ENCODE measurements at regions of chr19 and their contacts with region 1.

Region 1: DNA sequence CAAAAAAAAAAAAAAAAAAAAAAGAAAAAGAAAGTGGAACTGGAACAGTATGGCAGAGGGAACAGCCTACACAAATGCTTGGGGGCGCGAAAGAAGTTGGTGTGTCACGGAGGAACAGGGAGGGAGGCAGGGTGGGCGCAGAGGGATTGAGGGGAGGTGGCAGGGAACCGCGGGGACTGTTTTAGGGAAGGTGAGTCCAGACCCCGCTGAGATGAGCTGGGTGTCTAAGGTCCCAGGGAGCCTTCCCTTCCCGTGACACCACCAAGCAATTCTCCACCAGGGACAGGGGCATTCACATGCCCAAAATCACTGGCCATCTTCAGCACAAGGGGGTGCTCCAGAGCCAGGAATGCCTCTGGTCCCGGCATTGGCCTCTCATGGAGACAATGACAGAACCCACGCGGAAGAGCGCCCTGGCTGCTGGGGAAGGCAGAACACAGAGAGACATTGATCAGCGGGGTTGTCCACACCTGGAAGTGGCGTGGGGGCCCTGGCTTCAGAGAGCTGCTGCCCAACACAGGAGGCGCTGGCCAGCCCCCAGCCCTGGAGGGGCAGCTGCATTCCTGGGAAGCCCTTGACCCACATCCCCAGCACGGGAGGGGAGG is 6.9 kb downstream of the PEAK3 start:
- DNase-seq: peak in 8 of 9 donors; percentile 43 to 70 (median 58)
- ATAC-seq: peak; percentile 18
- H3K4me3 ChIP-seq: no peak overlapping the region
- H3K4me3 Mint-ChIP-seq: peak overlapping the region in 8 of 10 donors; percentile 29 to 80 (median 50)
- H3K27ac ChIP-seq: peak overlapping the region; percentile 41
- H3K27ac Mint-ChIP-seq: peak overlapping the region; percentile 34 to 86 (median 79)
- H3K4me1 ChIP-seq: peaks cover 24 to 28% of the 10 kb centered on the region in 2 donors
- H3K4me1 Mint-ChIP-seq: peaks cover 22 to 35% (median 32%) of the 10 kb centered on the region in 7 donors
- H3K27me3 ChIP-seq: no peaks in the 10 kb centered on the region
- H3K27me3 Mint-ChIP-seq: no peaks in the 10 kb centered on the region

Region 2: DNA sequence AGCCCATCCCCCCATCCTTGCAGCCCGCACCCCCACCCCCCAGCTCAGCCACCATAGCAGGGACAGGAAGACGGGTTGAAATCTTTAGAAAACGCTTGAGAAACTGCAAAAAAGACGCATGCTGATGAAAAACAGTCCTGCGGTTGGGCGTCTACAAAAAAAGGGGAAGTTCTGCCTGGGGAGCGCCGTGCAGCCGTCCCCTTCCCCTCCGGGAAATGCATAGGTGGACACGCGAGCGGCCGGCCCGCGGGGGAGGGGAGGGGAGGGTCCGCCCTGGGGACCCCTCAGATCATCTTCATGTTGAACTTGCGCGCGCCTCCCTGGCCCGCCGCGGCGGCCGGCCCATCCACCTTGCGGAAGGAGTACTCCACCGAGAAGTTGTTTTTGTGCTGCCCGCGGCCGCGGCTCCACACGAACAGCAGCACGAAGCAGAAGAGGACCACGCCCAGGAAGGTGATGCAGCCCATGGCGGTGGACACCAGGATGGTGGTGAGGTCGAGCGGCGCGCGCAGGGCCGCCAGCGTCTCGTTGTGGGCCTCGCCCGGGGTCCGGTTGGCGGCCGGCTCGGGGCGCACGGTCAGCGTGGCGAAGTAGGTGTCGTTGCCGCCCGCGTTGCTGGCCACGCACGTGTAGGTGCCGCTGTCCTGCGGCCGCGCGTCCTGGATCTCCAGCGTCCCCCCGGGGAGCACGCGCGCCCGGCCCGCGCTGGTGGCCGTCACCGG is 14.8 kb after region 1 on chr19:
- CTCF ChIA-PET with region 1: interaction called, 15 read pairs
- POLR2A ChIA-PET with region 1: interaction called, 18 read pairs
- intact Hi-C with region 1: loop called (anchors 1 to 2 kb)
- DNase-seq: peak; percentile 54 to 77 (median 66)
- ATAC-seq: peak; percentile 77
- H3K4me3 ChIP-seq: peak overlapping the region; percentile 74
- H3K4me3 Mint-ChIP-seq: peak overlapping the region; percentile 87 to 96 (median 91)
- H3K27ac ChIP-seq: peak overlapping the region; percentile 59
- H3K27ac Mint-ChIP-seq: peak overlapping the region; percentile 88 to 98 (median 92)
- H3K4me1 ChIP-seq: peaks cover 15 to 19% of the 10 kb centered on the region in 2 donors
- H3K4me1 Mint-ChIP-seq: peaks cover 22 to 42% (median 31%) of the 10 kb centered on the region in 7 donors
- H3K27me3 ChIP-seq: no peaks in the 10 kb centered on the region
- H3K27me3 Mint-ChIP-seq: no peaks in the 10 kb centered on the region

Region 3: GRCh38 chr19:2315818-2316353 is 40.9 kb after region 1 on chr19:
- CTCF ChIA-PET with region 1: interaction called, 3 read pairs
- POLR2A ChIA-PET with region 1: no interaction called
- intact Hi-C with region 1: loop called in 1 of 2 experiments (anchors 1 kb)
- DNase-seq: peak in 1 of 9 donors; percentile 29
- ATAC-seq: peak; percentile 88
- H3K4me3 ChIP-seq: no peak overlapping the region
- H3K4me3 Mint-ChIP-seq: no peak overlapping the region
- H3K27ac ChIP-seq: no peak overlapping the region
- H3K27ac Mint-ChIP-seq: no peak overlapping the region
- H3K4me1 ChIP-seq: no peaks in the 10 kb centered on the region
- H3K4me1 Mint-ChIP-seq: peaks cover 0 to 6% (median 0%) of the 10 kb centered on the region in 7 donors
- H3K27me3 ChIP-seq: peaks cover 0 to 5% of the 10 kb centered on the region in 2 donors
- H3K27me3 Mint-ChIP-seq: peaks cover 17 to 26% (median 25%) of the 10 kb centered on the region in 5 donors

Region 4: GRCh38 chr19:2391118-2391725 is 116.2 kb after region 1 on chr19:
- CTCF ChIA-PET with region 1: interaction called, 27 read pairs
- POLR2A ChIA-PET with region 1: interaction called, 12 read pairs
- intact Hi-C with region 1: loop called in 1 of 2 experiments (anchors 1 kb)
- DNase-seq: peak in 7 of 9 donors; percentile 26 to 59 (median 46)
- ATAC-seq: peak; percentile 88
- H3K4me3 ChIP-seq: no peak overlapping the region
- H3K4me3 Mint-ChIP-seq: no peak overlapping the region
- H3K27ac ChIP-seq: no peak overlapping the region
- H3K27ac Mint-ChIP-seq: peak overlapping the region in 2 of 9 donors; percentile 1 to 91
- H3K4me1 ChIP-seq: no peaks in the 10 kb centered on the region
- H3K4me1 Mint-ChIP-seq: peaks cover 4 to 16% (median 5%) of the 10 kb centered on the region in 7 donors
- H3K27me3 ChIP-seq: no peaks in the 10 kb centered on the region
- H3K27me3 Mint-ChIP-seq: peaks cover 0 to 13% (median 0%) of the 10 kb centered on the region in 5 donors

Region 5: DNA sequence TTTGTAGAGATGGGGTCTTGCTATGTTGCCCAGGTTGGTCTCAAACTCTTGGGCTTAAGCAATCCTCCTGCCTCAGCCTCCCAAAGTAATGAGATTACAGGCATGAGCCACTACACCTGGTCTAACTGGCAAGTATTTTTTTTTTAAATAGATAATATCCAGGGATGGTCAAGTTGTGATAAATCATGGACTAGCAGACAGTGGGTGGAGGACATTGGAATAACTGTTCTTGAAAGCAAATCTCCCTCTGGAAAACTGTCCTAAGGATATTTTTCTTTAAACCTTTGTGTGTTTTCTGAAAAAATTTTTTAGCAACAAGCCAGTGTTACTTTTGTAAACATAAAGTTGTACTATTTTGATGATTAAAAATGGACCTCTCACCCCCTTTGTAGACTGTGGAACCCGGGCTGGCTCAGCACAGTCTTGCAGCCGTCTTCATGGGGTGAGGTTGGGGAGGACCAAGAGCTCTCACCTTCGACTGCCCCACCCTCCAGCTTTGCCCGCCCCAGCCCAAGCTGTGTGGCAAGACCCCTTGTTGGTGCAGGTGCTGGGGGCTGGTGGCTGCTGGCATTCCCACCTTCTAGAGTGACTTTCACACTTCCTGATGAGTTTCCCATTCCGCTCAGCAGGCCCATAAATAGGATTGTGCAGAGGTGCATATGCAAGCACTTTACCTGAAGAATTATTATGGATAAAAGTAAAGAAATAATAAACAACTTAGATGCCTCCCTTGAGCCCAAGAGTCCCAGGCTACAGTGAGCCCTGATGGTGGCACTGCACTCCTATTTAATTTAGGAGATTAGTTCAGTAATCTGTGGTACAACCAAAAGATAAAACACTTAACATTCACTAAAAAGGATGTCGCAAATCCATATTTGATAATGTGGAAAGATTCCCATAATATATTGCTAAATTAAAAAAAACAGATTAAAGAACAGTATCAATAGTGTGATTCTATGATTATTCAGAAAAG is 308.2 kb after region 1 on chr19:
- CTCF ChIA-PET with region 1: no interaction called
- POLR2A ChIA-PET with region 1: no interaction called
- intact Hi-C with region 1: no loop called
- DNase-seq: no peak
- ATAC-seq: no peak
- H3K4me3 ChIP-seq: no peak overlapping the region
- H3K4me3 Mint-ChIP-seq: no peak overlapping the region
- H3K27ac ChIP-seq: no peak overlapping the region
- H3K27ac Mint-ChIP-seq: no peak overlapping the region
- H3K4me1 ChIP-seq: peaks cover 7 to 10% of the 10 kb centered on the region in 2 donors
- H3K4me1 Mint-ChIP-seq: peaks cover 0 to 9% (median 4%) of the 10 kb centered on the region in 7 donors
- H3K27me3 ChIP-seq: no peaks in the 10 kb centered on the region
- H3K27me3 Mint-ChIP-seq: peaks cover 0 to 32% (median 0%) of the 10 kb centered on the region in 5 donors